ENCODE measurements at regions of chr1 and their contacts with region 1.

Region 1: DNA sequence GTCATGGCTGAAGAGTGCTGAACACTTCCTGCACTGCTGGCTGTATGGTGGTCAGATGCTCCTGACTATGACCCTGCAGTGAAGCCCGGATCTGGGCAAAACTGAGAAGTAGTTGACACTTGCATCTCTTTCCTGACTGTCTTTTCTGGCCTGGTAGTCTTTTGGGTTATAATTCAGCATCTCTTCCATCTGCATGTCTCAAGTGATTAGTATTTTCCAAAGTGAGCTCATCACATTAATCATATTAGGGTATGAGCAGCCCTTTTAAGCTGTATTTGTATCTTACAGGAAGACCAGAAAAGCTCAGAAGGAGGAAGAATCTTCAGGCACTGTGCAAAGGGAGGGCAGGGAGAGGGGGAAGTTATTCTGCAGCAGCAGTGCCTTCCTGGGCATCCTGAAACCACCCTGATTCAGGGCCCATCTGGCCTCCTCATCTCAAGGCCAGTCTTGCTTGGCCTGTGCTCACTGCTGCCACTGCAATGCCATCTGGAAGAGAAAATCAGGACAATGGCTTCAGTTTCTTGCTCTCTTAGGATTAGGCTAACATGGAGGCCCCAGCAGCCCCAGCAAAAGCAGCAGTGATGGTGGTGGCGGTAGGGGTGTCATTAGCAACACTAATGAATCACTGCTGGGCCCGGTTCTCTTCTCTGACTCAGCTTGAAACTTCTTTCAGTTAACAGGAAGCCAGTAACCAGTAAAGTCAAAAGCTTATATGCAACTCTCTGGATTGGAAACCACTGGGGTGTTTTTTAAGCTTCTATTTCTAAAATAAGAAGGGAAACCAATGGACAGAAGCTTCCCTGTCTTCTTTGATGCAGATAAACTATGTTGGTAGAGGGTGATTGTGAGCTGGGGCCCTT is 63.3 kb upstream of the WDR26 start:
- DNase-seq: peak; percentile 90
- ATAC-seq: peak; percentile 74
- H3K4me3 ChIP-seq: no peak overlapping the region; the same call in 1 of the 2 replicates
- H3K27ac ChIP-seq: peak overlapping the region; percentile 84
- H3K4me1 ChIP-seq: peaks cover 22% of the 10 kb centered on the region
- H3K27me3 ChIP-seq: no peaks in the 10 kb centered on the region
- CTCF ChIP-seq: no peak; the same call in 1 of the 2 replicates
- POLR2A ChIP-seq: no peak
- RAD21 ChIP-seq: no peak

Region 2: GRCh38 chr1:224434691-224435317 is 63.1 kb before region 1 on chr1 and contains the start of gene WDR26:
- CTCF ChIA-PET with region 1: no interaction called
- POLR2A ChIA-PET with region 1: no interaction called
- dilution Hi-C with region 1: no loop called
- in situ Hi-C with region 1: no loop called
- intact Hi-C with region 1: loop called (anchors 2 kb)
- DNase-seq: peak; percentile 80
- ATAC-seq: peak; percentile 74
- H3K4me3 ChIP-seq: peak within 1 kb of the TSS; percentile 77
- H3K27ac ChIP-seq: peak within 1 kb of the TSS; percentile 99
- H3K4me1 ChIP-seq: peaks cover 4% of the 10 kb centered on the region; the same call in 1 of the 2 replicates
- H3K27me3 ChIP-seq: no peaks in the 10 kb centered on the region
- CTCF ChIP-seq: 0 out of 2 replicates have a peak, but pooled peaks have one; percentile 8
- POLR2A ChIP-seq: peak; percentile 90
- RAD21 ChIP-seq: no peak
- total RNA-seq, gene WDR26: 23.8 and 41.4 TPM in 2 replicates

Region 3: DNA sequence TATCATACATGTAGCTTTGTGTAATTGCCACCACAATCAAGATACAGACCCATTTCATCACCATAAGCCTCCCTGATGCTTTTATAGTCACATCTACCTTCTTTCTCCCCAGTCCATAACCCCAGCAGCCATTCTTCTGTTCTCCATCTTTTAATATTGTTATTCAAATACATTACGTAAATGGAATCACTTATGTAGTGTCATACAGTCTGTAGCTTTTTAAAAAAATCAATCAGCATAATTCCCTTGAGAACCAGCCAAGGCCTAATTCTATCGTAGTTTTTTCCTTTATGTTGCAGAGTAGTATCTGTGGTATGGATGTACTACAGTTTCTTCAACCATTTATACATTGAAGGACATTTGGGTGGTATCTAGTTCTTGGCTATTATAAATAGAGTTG is 31.8 kb before region 1 on chr1:
- CTCF ChIA-PET with region 1: no interaction called
- POLR2A ChIA-PET with region 1: no interaction called
- dilution Hi-C with region 1: no loop called
- in situ Hi-C with region 1: no loop called
- intact Hi-C with region 1: no loop called
- DNase-seq: no peak
- ATAC-seq: no peak
- H3K4me3 ChIP-seq: no peak overlapping the region
- H3K27ac ChIP-seq: no peak overlapping the region
- H3K4me1 ChIP-seq: no peaks in the 10 kb centered on the region
- H3K27me3 ChIP-seq: no peaks in the 10 kb centered on the region
- CTCF ChIP-seq: no peak
- POLR2A ChIP-seq: no peak
- RAD21 ChIP-seq: no peak

Region 4: GRCh38 chr1:225424562-225425200 is 926.7 kb after region 1 on chr1:
- CTCF ChIA-PET with region 1: no interaction called
- POLR2A ChIA-PET with region 1: no interaction called
- dilution Hi-C with region 1: no loop called
- in situ Hi-C with region 1: loop called (anchors 25 kb)
- intact Hi-C with region 1: no loop called
- DNase-seq: peak; percentile 56
- ATAC-seq: no peak
- H3K4me3 ChIP-seq: no peak overlapping the region
- H3K27ac ChIP-seq: peak overlapping the region; percentile 12
- H3K4me1 ChIP-seq: peaks cover 16% of the 10 kb centered on the region
- H3K27me3 ChIP-seq: no peaks in the 10 kb centered on the region
- CTCF ChIP-seq: no peak
- POLR2A ChIP-seq: no peak
- RAD21 ChIP-seq: no peak

Measured in IMR-90 (cell line).